IMR-90 (cell line): ENCODE measurements at regions of chr7 and their contacts with region 1.

Region 1: GRCh38 chr7:17171427-17171826 is 127.0 kb upstream of the AHR start:
- DNase-seq: no peak
- ATAC-seq: no peak
- H3K4me3 ChIP-seq: no peak overlapping the region
- H3K27ac ChIP-seq: no peak overlapping the region
- H3K4me1 ChIP-seq: no peaks in the 10 kb centered on the region
- H3K27me3 ChIP-seq: no peaks in the 10 kb centered on the region
- CTCF ChIP-seq: no peak
- POLR2A ChIP-seq: no peak
- RAD21 ChIP-seq: no peak

Region 2: GRCh38 chr7:17212188-17212587 is 40.8 kb after region 1 on chr7:
- CTCF ChIA-PET with region 1: no interaction called
- POLR2A ChIA-PET with region 1: no interaction called
- dilution Hi-C with region 1: no loop called
- in situ Hi-C with region 1: no loop called
- intact Hi-C with region 1: loop called (anchors 5 kb)
- DNase-seq: no peak
- ATAC-seq: no peak
- H3K4me3 ChIP-seq: no peak overlapping the region
- H3K27ac ChIP-seq: no peak overlapping the region
- H3K4me1 ChIP-seq: no peaks in the 10 kb centered on the region
- H3K27me3 ChIP-seq: no peaks in the 10 kb centered on the region
- CTCF ChIP-seq: no peak
- POLR2A ChIP-seq: no peak
- RAD21 ChIP-seq: no peak